GM18951 (cell line): ENCODE measurements at regions of chr6 and their contacts with region 1.

Region 1: DNA sequence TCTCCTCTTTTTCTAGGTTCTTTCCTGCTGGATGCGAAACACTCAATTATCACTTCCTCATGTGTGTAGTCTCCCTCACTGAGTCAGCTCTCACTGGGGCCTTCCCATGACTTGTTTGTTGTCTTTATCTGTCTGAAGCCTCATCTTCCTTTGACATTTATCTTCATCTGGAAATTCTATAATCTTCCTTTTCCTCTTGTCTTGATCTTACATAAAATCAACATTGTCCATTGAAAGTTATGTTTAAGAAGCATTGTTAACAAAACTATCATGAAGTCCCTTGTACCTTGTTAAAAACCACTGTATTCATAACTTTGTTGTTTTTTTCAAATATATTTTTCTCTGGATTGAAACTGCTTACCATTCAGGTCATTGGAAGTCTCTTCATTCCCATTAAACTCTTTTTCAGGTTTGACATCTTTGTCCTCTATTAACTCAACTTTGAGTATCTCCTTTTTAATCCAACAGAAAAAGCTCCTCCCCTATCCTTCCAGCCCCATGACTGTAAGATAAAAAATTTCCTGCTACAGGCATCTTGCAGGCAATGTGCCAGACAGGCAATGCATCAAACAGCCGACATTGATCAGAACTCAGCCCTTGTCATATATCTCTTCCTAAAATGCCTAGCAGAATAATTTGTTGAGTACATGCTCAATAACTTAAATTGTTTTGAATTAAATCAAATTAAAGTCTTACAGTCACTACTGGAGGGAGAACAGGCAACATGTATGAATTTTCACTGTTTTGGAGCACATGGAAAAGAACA is 34.8 kb downstream of the MYLIP start:
- POLR2A ChIP-seq: no peak

Region 2: GRCh38 chr6:15962449-15962764 is 201.3 kb before region 1 on chr6:
- in situ Hi-C with region 1: loop called (anchors 5 kb)
- POLR2A ChIP-seq: no peak

Region 3: DNA sequence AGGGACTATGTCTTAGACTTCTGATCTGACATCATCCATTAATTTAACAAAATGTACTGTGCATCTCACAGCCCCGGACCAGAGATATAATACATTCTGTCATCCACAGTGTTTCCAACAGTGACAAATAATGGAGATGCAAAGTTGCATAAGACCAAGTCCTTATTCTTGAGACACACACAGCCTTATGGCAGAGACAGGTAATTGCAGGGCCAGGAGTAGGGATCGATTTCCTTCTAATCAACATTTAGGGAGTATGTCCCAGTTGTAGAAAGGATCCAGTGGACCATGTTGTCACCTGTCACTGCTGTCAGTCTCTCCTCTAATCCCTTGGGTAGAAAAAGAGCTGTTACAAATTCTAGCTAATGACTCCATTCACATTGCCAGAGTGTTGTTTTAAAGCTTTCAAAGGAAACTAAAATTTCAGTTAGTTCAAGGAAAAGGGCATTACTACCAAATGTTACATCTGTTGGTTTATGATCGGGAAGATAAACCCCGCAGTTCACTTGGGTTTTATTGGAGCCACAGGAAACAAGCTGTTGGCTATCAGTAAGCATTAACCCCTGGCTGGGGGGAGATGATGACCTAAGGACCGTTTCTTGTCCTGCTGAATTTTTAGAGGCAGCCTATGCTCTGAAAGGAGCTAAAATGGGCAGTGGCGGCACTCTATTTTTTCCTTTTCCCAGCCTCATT is 709.0 kb after region 1 on chr6:
- in situ Hi-C with region 1: no loop called
- POLR2A ChIP-seq: no peak